ENCODE measurements at regions of chr7 and their contacts with region 1.

Region 1: GRCh38 chr7:112411186-112411795 is 39.0 kb upstream of the IFRD1 start:
- DNase-seq: peak in 1 of 35 experiments; percentile 34
- ATAC-seq: peak in 1 of 4 experiments; percentile 43
- H3K4me3 ChIP-seq: no peak overlapping the region
- H3K4me3 Mint-ChIP-seq: no peak overlapping the region
- H3K27ac ChIP-seq: no peak overlapping the region
- H3K27ac Mint-ChIP-seq: peak overlapping the region in 1 of 2 donors; percentile 39
- H3K4me1 ChIP-seq: no peaks in the 10 kb centered on the region
- H3K4me1 Mint-ChIP-seq: peaks cover 0 to 6% (median 0%) of the 10 kb centered on the region in 3 donors
- H3K27me3 ChIP-seq: peaks cover 0 to 4% of the 10 kb centered on the region in 2 experiments
- H3K27me3 Mint-ChIP-seq: peaks cover 8 to 18% of the 10 kb centered on the region in 2 donors

Region 2: DNA sequence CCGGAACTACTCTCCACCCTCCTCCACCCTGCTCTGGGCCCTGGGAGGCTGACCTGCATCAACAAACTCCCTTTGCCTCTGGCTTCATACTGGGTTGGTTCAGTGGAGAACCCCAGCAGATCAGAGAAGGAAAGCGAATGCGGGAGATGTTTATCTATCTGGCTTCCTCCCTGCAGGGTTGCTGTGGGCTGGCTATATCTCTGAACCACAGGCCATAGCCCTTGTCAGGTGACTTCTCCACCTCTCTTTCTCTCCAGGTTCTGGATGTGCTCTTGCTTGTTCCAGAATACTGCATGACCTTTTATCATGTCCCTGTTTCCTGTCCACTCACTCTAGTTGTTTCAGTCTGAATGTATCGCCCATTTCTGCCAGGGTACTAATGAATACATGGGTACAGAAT is 12.8 kb before region 1 on chr7:
- CTCF ChIA-PET with region 1: interaction called, 3 to 10 read pairs
- POLR2A ChIA-PET with region 1: no interaction called
- DNase-seq: peak in 10 of 35 experiments; percentile 7 to 51 (median 13)
- ATAC-seq: peak; percentile 65 to 82 (median 76)
- H3K4me3 ChIP-seq: no peak overlapping the region
- H3K4me3 Mint-ChIP-seq: peak overlapping the region in 1 of 3 donors; percentile 7
- H3K27ac ChIP-seq: no peak overlapping the region
- H3K27ac Mint-ChIP-seq: peak overlapping the region; percentile 72 to 84
- H3K4me1 ChIP-seq: peaks cover 8 to 9% of the 10 kb centered on the region in 2 experiments
- H3K4me1 Mint-ChIP-seq: peaks cover 13 to 33% (median 15%) of the 10 kb centered on the region in 3 donors
- H3K27me3 ChIP-seq: peaks cover 0 to 4% of the 10 kb centered on the region in 2 experiments
- H3K27me3 Mint-ChIP-seq: peaks cover 0 to 3% of the 10 kb centered on the region in 2 donors

Measured in T-cell (primary cell).